Activated B cell treated with CpG ODN at 0.5 μM for 24 hours (primary cell): ENCODE measurements at regions of chr22 and their contacts with region 1.

Region 1: DNA sequence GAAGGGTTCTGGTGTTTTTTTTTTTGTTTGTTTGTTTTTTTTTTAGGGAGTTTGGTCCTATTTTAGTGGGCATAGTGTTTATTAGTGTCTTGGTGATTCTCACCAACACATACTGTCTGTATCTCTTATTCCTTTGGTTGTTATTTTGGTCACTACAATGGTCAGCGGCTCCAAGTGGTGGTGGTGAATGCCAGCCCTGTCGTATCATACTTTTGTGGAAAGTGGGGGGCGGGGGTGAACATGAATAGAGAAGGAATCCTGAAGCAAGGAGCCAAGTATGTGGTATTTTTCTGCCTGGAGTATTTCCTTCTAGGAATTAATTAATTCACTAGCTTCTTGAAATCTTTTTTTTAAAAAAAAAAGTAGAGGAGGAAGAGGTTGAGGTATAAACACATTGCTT is 79.6 kb downstream of the GRK3 start:
- DNase-seq: no peak
- ATAC-seq: no peak
- H3K4me3 Mint-ChIP-seq: peak overlapping the region; percentile 21
- H3K27ac Mint-ChIP-seq: peak overlapping the region; percentile 81
- H3K4me1 Mint-ChIP-seq: peaks cover 63% of the 10 kb centered on the region
- H3K27me3 Mint-ChIP-seq: no peaks in the 10 kb centered on the region
- CTCF ChIP-seq: no peak

Region 2: GRCh38 chr22:25656724-25657123 is 12.6 kb after region 1 on chr22:
- CTCF ChIA-PET with region 1: no interaction called
- POLR2A ChIA-PET with region 1: interaction called, 4 read pairs
- intact Hi-C with region 1: loop called (anchors 2 kb)
- DNase-seq: peak; percentile 23
- ATAC-seq: peak; percentile 99
- H3K4me3 Mint-ChIP-seq: peak overlapping the region; percentile 42
- H3K27ac Mint-ChIP-seq: peak overlapping the region; percentile 72
- H3K4me1 Mint-ChIP-seq: peaks cover 81% of the 10 kb centered on the region
- H3K27me3 Mint-ChIP-seq: no peaks in the 10 kb centered on the region
- CTCF ChIP-seq: no peak

Region 3: DNA sequence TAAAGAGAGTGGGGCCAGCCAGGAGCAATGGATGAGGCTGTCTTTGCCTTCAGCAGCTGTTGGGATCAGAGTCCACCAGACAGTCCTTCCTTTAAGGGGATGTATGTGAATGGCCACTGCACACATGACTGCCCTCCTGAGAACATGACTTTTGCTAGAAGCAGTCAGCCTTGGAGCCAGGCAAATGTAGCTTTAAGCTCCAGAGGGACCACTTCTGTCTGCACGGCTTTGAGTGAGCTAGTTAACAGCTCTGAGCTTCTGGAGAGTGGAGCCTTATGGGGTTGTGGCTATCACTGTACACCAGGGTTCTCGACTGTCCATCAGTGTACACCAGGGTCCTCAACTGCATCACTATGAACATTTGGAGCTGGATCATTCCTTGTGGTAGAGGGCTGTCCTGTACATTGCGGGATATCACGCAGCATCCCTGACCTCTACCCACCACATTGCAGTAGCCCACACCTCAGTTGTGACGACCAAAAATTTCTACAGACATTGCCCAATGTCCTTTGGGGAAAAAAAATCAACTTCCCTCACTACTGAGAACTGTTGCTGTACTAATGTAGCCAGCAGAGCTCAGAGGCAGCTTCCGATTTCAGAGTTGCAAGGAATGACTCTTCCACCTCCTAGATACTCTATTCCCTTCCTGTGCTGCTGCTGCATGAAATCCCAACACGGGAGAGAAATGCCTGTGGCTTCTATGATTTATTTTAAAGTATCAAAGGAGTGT is 267.3 kb after region 1 on chr22:
- CTCF ChIA-PET with region 1: no interaction called
- POLR2A ChIA-PET with region 1: no interaction called
- intact Hi-C with region 1: no loop called
- DNase-seq: no peak
- ATAC-seq: no peak
- H3K4me3 Mint-ChIP-seq: no peak overlapping the region
- H3K27ac Mint-ChIP-seq: no peak overlapping the region
- H3K4me1 Mint-ChIP-seq: no peaks in the 10 kb centered on the region
- H3K27me3 Mint-ChIP-seq: peaks cover 4% of the 10 kb centered on the region
- CTCF ChIP-seq: no peak